ENCODE measurements at regions of chr4 and their contacts with region 1.

Region 1: DNA sequence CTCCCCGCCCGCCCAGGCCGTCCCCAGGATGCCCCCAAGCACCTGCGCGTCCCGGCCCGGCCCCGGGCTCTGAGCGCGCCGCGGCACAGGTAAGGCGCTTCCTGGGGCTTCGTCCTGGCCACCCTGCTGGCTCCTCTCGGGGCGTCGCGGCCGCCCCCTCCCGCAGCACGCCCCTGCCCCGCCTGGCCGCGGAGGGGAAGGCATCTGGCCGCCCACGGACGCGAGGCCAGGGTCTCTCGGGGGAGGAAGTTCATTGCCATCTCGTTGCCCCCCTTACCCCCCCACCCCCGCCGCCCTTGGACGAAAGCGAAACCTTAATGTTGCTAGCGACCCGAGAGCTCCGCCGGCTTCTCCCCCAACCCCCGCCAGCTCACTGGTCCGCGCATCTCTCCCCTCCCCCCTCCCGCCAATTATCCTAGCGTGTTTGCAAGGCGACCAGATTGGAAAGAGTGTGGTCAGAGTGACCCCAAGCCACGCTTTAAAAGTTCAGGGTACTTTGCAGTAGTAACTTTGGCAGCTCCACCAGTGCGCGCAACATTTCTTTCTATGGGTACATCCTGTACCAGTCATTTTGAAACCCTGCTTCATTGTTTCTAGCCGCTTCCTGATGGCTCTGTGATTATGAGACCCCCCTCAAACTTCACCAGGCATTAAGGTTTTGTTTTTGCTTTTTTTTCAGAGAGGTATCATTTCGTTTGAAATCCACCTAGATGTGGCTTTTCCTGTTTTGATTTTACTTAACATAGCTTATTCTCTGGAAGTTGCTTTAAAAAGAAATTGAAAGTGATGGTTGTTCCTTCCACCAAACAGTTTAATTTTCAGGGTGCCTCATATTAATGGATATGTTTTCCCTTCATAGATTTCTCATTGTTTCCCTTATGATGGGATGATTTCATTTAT is 626 bp downstream of the TBC1D1 start:
- DNase-seq: peak; percentile 15 to 77
- H3K4me3 ChIP-seq: peak overlapping the region; percentile 73 to 98
- H3K27ac ChIP-seq: peak overlapping the region; percentile 97
- H3K4me1 ChIP-seq: peaks cover 0 to 27% of the 10 kb centered on the region in 2 donors
- H3K27me3 ChIP-seq: no peaks in the 10 kb centered on the region
- CTCF ChIP-seq: peak in 1 of 3 experiments; percentile 24

Region 2: DNA sequence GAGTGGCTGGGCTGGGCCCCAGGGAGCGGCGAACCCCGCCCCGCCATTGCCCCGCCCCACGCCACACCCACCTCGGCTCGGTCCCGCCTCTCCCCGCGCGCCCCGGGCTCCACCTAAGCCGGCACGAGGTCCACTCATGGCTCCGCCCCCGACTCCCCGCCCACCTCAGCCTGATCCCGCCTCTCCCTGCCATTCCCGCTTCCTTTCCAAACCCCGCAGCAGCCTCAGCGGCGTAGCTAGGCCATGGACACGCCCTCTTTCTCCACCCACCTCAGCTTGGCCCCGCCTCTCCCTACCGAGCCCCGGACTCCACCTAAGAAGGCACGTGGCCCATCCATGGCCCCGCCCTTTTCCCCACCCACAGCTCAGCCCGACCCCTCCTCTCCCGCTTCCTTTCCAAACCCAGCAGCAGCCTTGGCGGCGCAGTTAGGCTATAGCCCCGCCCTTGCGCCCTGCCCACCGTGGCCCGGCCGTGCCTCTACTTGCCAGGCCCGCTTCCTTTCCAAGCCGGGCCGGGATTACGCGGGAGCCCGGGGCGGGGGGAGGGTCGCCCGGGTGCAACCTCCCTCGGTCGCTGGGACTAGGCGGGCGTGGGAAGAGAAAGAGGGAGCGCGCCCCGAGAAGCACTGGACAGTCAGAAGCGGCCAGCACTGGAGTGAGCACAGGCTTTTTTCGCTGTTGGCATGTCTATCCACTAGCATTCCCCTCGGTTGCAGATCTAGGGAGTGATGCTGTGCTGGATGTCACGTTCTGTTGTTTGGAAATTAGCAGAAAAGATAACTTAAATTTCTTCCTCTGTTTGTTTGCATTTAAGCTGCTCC is 204.9 kb before region 1 on chr4 and contains the start of gene RELL1:
- intact Hi-C with region 1: loop called (anchors 2 kb)
- DNase-seq: peak; percentile 98 to 100
- H3K4me3 ChIP-seq: peak within 1 kb of the TSS; percentile 97 to 100
- H3K27ac ChIP-seq: peak within 1 kb of the TSS; percentile 96 to 99
- H3K4me1 ChIP-seq: peaks cover 6 to 7% of the 10 kb centered on the region in 2 donors
- H3K27me3 ChIP-seq: no peaks in the 10 kb centered on the region
- CTCF ChIP-seq: no peak
- total RNA-seq, gene RELL1: 61.5 TPM

Region 3: DNA sequence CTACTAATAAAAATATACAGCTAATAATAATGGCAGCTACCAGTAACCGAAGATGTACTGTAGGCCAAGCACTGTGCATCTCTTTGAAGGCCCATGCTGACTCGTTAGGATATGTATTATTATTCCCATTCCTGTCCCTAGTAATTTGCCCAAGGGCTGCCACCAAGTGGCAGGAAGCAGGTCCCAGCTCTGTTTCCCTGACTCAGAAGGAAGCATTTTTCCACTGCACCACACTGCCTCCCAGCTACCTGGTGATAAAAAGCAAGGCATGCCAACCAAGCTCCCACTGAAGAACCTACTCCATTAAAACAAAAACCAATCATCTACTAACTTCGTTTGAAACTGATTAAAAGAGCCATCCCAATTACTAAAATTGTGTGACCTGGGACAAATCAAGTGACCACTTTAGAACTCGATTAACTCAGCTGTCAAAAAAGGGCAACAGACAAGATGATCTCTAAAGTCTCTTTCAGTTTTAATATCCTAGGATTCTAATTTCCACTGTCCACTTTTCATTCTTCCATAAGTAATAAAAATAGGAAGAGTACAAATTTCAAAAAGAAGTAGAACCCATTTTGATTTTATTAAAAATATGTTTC is 89.3 kb before region 1 on chr4:
- intact Hi-C with region 1: loop called (anchors 5 kb)
- DNase-seq: no peak
- H3K4me3 ChIP-seq: no peak overlapping the region
- H3K27ac ChIP-seq: no peak overlapping the region
- H3K4me1 ChIP-seq: no peaks in the 10 kb centered on the region
- H3K27me3 ChIP-seq: no peaks in the 10 kb centered on the region
- CTCF ChIP-seq: peak; percentile 23 to 70 (median 45)

Region 4: DNA sequence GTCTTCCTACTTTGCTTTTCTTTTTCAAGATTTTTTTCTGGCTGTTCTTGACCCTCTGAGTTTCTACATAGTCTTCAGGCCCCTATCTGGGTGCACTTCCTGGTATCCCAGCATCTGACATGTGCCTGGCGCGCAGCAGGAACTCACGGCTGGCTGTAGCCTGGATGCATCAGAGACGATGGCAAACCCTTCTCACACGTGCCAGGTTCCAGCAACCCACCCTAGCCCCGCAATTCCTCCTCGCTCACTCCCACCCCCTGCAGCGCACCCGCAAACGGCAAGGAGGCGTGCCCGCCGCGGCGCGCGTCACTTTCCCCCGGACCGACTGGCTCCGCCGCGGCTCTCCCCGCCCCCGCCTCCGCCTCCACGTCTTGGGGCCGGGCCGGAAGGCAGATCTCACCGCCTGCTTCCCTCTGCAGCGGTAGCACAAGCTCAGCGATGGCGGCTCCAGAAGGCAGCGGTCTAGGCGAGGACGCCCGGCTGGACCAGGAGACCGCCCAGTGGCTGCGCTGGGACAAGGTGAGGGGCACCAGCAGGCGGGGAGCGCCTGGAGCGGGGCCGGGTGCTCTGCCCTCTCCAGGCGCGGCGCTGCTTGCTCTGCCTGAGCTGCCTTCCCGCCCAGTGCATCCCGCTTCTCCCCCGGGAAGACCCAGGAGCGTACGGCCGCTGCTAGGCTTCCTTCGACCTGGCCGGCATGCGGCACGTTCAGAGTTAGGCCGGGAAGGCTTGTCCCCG is 65.0 kb before region 1 on chr4 and contains the start of gene PGM2:
- intact Hi-C with region 1: loop called (anchors 5 kb)
- DNase-seq: peak; percentile 63 to 91
- H3K4me3 ChIP-seq: peak within 1 kb of the TSS; percentile 86 to 96
- H3K27ac ChIP-seq: peak within 1 kb of the TSS; percentile 86 to 90
- H3K4me1 ChIP-seq: peaks cover 2 to 16% of the 10 kb centered on the region in 2 donors
- H3K27me3 ChIP-seq: no peaks in the 10 kb centered on the region
- CTCF ChIP-seq: peak in 1 of 3 experiments; percentile 7
- total RNA-seq, gene PGM2: 7.1 TPM

Region 5: GRCh38 chr4:37908488-37909331 is 17.2 kb after region 1 on chr4:
- intact Hi-C with region 1: loop called (anchors 2 kb)
- DNase-seq: no peak
- H3K4me3 ChIP-seq: peak overlapping the region; percentile 34 to 54
- H3K27ac ChIP-seq: peak overlapping the region; percentile 82 to 85
- H3K4me1 ChIP-seq: peaks cover 0 to 19% of the 10 kb centered on the region in 2 donors
- H3K27me3 ChIP-seq: no peaks in the 10 kb centered on the region
- CTCF ChIP-seq: no peak

Region 6: DNA sequence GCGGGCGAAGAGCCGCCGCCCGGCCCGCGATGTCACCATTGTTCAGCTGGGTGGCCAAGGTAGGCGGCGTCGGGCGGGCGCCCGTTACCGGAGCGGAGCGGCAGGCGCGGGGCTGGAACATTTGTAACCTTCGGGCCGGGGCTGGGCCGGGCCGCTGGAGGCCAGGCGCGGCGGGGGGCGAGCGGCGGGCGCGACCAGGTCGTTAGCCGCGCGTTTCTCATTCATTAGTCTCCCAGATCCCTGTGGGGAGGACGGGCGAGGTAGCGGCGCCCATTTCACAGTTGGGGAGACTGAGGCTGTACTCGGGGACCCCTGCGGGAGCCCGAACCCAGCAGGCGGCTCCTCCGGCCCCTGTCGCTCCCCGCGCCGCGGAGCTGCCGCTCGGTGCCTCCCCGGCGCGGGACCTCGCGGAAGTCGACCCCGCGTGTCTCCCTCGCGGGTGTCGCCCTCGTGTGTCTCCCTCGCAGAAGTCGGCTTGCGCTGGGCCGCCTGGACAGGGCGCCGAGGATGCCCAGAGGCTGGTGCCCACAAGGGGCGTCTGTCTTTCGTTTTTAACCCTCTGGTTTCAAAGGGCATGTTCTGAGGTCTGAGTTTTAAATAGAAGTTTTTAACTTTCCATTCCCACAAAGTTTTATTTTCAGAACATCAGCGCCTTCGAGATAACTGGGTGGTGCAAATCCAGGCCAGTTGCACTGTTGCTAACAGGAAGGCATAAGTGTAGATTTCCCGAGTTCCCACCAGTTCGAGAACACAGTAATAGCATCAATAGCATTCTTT is 86.1 kb after region 1 on chr4:
- intact Hi-C with region 1: loop called (anchors 1 kb)
- DNase-seq: peak; percentile 44 to 90
- H3K4me3 ChIP-seq: peak overlapping the region; percentile 76 to 99
- H3K27ac ChIP-seq: peak overlapping the region; percentile 97 to 99
- H3K4me1 ChIP-seq: peaks cover 4 to 26% of the 10 kb centered on the region in 2 donors
- H3K27me3 ChIP-seq: no peaks in the 10 kb centered on the region
- CTCF ChIP-seq: peak; percentile 76 to 86 (median 78)

Region 7: DNA sequence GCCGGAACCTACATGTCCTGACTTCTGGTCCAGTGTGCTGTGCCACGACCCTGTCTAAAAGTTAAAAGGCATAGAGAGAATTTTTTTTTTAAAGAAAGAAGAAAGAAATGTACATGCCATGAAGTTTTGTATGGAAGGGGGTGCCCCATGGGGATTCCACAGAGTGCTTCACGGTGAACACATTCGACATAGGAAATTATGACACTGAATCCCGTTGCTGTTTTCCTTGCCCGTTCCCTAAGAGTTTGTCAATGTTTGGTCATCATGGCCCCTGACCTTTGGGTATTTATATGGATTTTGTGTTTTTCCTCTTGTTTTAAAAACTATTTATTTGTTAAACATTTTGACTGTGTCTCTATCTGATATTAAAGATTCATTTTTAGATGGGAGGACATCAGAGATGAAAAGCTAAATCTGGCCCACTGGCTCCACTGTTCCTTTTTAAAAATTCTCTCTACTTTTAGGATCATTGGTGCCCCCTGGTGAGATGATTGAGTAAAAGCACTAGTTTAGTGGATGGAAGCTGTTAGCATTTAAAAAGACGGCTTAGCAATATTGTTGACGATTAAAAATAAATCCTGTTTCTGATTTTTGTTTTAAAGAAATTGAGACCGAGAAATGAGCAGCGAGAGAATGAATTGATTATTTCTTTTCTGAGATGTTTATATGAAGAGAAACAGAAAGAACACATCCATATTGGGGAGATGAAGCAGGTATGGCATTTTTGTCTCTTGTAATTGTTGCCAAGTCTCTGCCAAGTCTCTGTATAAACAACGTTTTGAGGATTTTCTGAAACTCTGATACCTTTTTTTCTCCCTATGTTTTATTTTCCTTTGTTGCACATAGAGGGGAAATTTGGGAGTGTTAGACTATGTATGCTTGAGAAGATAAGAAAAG is 143.7 kb after region 1 on chr4:
- intact Hi-C with region 1: loop called (anchors 10 kb)
- DNase-seq: no peak
- H3K4me3 ChIP-seq: no peak overlapping the region
- H3K27ac ChIP-seq: peak overlapping the region; percentile 1 to 40
- H3K4me1 ChIP-seq: no peaks in the 10 kb centered on the region
- H3K27me3 ChIP-seq: no peaks in the 10 kb centered on the region
- CTCF ChIP-seq: peak; percentile 60 to 78 (median 72)